Vagina (tissue), 2 donors: ENCODE measurements at regions of chr14 and their contacts with region 1.

Region 1: GRCh38 chr14:101964297-101965144 is at the start of gene DYNC1H1:
- DNase-seq: peak in 1 of 2 donors; percentile 96
- H3K4me3 ChIP-seq: peak within 1 kb of the TSS; percentile 95 to 97
- H3K27ac ChIP-seq: peak within 1 kb of the TSS; percentile 99
- H3K4me1 ChIP-seq: peaks cover 45% of the 10 kb centered on the region
- H3K27me3 ChIP-seq: no peaks in the 10 kb centered on the region
- CTCF ChIP-seq: no peak
- POLR2A ChIP-seq: peak; percentile 99
- total RNA-seq, gene DYNC1H1: 499 TPM

Region 2: GRCh38 chr14:101761032-101761880 is 203.3 kb before region 1 on chr14 and contains the start of gene PPP2R5C:
- intact Hi-C with region 1: loop called (anchors 5 kb)
- DNase-seq: peak in 1 of 2 donors; percentile 90
- H3K4me3 ChIP-seq: peak within 1 kb of the TSS; percentile 99 to 100
- H3K27ac ChIP-seq: peak within 1 kb of the TSS; percentile 100
- H3K4me1 ChIP-seq: peaks cover 12% of the 10 kb centered on the region
- H3K27me3 ChIP-seq: no peaks in the 10 kb centered on the region
- CTCF ChIP-seq: no peak
- POLR2A ChIP-seq: peak in 1 of 2 donors; percentile 67
- total RNA-seq, gene PPP2R5C: 88.1 TPM

Region 3: GRCh38 chr14:102020058-102020971 is 55.8 kb after region 1 on chr14:
- intact Hi-C with region 1: no loop called
- DNase-seq: no peak
- H3K4me3 ChIP-seq: no peak overlapping the region
- H3K27ac ChIP-seq: no peak overlapping the region
- H3K4me1 ChIP-seq: no peaks in the 10 kb centered on the region
- H3K27me3 ChIP-seq: no peaks in the 10 kb centered on the region
- CTCF ChIP-seq: no peak
- POLR2A ChIP-seq: no peak

Region 4: GRCh38 chr14:102096214-102097114 is 131.9 kb after region 1 on chr14:
- intact Hi-C with region 1: loop called (anchors 5 kb)
- DNase-seq: no peak
- H3K4me3 ChIP-seq: no peak overlapping the region
- H3K27ac ChIP-seq: no peak overlapping the region
- H3K4me1 ChIP-seq: no peaks in the 10 kb centered on the region
- H3K27me3 ChIP-seq: no peaks in the 10 kb centered on the region
- CTCF ChIP-seq: peak; percentile 48 to 70 (median 66)
- POLR2A ChIP-seq: no peak

Region 5: DNA sequence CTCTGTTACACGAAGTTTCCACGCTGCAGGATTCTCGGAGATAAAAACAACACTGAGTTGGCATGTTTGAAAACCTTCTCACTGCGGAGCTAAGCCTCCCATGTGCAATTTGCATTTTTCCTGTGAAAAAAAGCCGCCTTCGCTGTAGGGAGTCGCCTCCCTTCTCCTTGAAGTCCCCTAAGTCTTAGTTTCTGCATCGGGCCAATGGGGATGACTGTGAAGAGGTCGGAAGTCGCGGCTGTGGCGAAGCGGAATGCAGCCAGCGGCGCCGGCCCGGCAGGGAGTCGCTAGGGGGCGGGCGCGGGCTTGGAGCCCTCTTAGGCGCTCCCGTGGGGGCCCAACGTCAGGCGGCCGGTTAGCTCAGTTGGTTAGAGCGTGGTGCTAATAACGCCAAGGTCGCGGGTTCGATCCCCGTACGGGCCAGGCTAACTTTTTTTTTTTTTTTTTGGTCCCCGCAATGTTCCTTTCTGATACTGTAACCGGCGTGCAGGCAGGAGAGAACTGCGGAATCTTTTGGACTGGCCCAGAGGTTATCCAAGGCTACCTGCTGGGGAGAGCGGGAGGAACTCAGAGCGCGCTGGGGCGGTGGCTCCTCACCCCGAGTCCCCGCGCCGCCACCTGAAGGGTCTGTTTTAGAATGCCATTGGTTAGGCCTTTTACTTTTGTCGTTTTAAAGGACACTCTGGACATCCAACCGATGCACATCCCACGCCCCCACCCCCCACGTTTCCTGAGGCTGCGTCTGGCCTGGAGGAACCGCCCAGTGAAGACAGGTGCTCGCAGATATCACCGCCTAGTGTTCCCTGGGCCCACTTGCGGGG is 352.4 kb after region 1 on chr14:
- intact Hi-C with region 1: loop called (anchors 2 kb)
- DNase-seq: peak in 1 of 2 donors; percentile 96
- H3K4me3 ChIP-seq: peak overlapping the region; percentile 41 to 52
- H3K27ac ChIP-seq: peak overlapping the region; percentile 86
- H3K4me1 ChIP-seq: peaks cover 44% of the 10 kb centered on the region
- H3K27me3 ChIP-seq: no peaks in the 10 kb centered on the region
- CTCF ChIP-seq: peak; percentile 16 to 88 (median 84)
- POLR2A ChIP-seq: no peak

Region 6: GRCh38 chr14:102591889-102592763 is 627.6 kb after region 1 on chr14 and contains the start of gene RCOR1:
- intact Hi-C with region 1: loop called (anchors 5 kb)
- DNase-seq: peak; percentile 97
- H3K4me3 ChIP-seq: peak within 1 kb of the TSS; percentile 72 to 95
- H3K27ac ChIP-seq: peak within 1 kb of the TSS; percentile 98
- H3K4me1 ChIP-seq: peaks cover 28% of the 10 kb centered on the region
- H3K27me3 ChIP-seq: no peaks in the 10 kb centered on the region
- CTCF ChIP-seq: no peak
- POLR2A ChIP-seq: peak in 1 of 2 donors; percentile 86
- total RNA-seq, gene RCOR1: 24.3 TPM